ENCODE measurements at regions of chr7 and their contacts with region 1.

Region 1: GRCh38 chr7:859359-860030 is 16.9 kb upstream of the GET4 start:
- DNase-seq: no peak
- H3K4me3 ChIP-seq: no peak overlapping the region
- H3K27ac ChIP-seq: peak overlapping the region in 1 of 4 donors; percentile 42
- H3K4me1 ChIP-seq: no peaks in the 10 kb centered on the region
- H3K27me3 ChIP-seq: no peaks in the 10 kb centered on the region
- CTCF ChIP-seq: no peak
- EP300 ChIP-seq: no peak
- POLR2A ChIP-seq: no peak

Region 2: GRCh38 chr7:471866-472639 is 387.4 kb before region 1 on chr7:
- intact Hi-C with region 1: no loop called
- DNase-seq: peak; percentile 82
- H3K4me3 ChIP-seq: no peak overlapping the region
- H3K27ac ChIP-seq: peak overlapping the region; percentile 42 to 72 (median 58)
- H3K4me1 ChIP-seq: peaks cover 0 to 12% (median 10%) of the 10 kb centered on the region in 4 donors
- H3K27me3 ChIP-seq: no peaks in the 10 kb centered on the region
- CTCF ChIP-seq: no peak
- EP300 ChIP-seq: peak in 1 of 4 donors; percentile 73
- POLR2A ChIP-seq: no peak

Region 3: GRCh38 chr7:699061-699807 is 160.3 kb before region 1 on chr7:
- intact Hi-C with region 1: no loop called
- DNase-seq: peak; percentile 63
- H3K4me3 ChIP-seq: no peak overlapping the region
- H3K27ac ChIP-seq: peak overlapping the region in 1 of 4 donors; percentile 9
- H3K4me1 ChIP-seq: no peaks in the 10 kb centered on the region
- H3K27me3 ChIP-seq: no peaks in the 10 kb centered on the region
- CTCF ChIP-seq: no peak
- EP300 ChIP-seq: no peak
- POLR2A ChIP-seq: no peak

Region 4: DNA sequence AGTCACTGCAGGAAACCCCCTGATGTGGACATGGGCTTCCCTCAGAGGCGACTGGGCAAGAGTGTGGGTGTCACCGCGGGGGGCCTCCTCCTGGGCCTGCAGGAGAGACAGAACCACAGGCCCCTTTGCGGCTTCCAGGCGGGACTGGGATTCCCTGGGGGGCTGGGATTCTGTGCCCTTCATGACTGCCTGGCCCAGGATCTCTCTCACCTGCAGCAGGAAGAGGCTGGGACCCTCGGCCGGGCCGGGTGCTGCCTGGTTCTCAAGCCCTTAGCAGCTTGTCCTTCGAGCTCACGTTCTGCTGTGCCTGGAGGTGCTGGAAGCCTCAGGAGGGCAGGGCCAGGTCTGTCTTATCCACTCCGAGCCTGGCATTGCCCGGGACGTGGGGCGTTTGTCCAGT is 15.5 kb before region 1 on chr7:
- intact Hi-C with region 1: loop called (anchors 2 kb)
- DNase-seq: no peak
- H3K4me3 ChIP-seq: no peak overlapping the region
- H3K27ac ChIP-seq: peak overlapping the region in 3 of 4 donors; percentile 84 to 88 (median 85)
- H3K4me1 ChIP-seq: peaks cover 0 to 29% (median 25%) of the 10 kb centered on the region in 4 donors
- H3K27me3 ChIP-seq: no peaks in the 10 kb centered on the region
- CTCF ChIP-seq: no peak
- EP300 ChIP-seq: no peak
- POLR2A ChIP-seq: no peak